Caco-2 (cell line): ENCODE measurements at regions of chr5 and their contacts with region 1.

Region 1: DNA sequence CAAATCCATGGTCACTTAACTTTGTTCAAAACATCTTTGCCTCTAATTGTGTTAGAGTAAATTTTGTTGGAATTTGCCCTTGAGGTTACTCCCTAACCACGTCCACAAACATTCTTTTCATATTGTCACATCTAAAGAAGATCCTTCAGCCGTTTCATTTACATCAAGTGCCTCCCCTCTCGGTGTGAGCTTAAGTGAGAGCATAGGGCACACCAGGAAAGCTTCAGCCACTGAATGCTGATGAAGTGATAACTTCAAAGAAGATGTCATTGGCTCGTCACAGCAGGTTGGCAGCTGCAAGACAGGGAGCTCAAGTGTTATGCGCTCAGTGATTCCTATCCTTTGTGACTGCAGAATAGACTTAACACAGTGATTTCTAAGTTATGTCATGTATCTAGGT is 49.6 kb upstream of the ADAMTS19 start:
- DNase-seq: peak; percentile 8 to 39
- H3K4me3 ChIP-seq: no peak overlapping the region
- H3K4me3 Mint-ChIP-seq: no peak overlapping the region
- H3K27ac Mint-ChIP-seq: no peak overlapping the region
- H3K4me1 ChIP-seq: peaks cover 26% of the 10 kb centered on the region; the same call in 1 of the 2 replicates
- H3K4me1 Mint-ChIP-seq: peaks cover 18% of the 10 kb centered on the region
- H3K27me3 ChIP-seq: no peaks in the 10 kb centered on the region
- H3K27me3 Mint-ChIP-seq: peaks cover 2% of the 10 kb centered on the region
- CTCF ChIP-seq: no peak

Region 2: GRCh38 chr5:128228008-128228407 is 1182.5 kb before region 1 on chr5:
- CTCF ChIA-PET with region 1: no interaction called
- POLR2A ChIA-PET with region 1: no interaction called
- intact Hi-C with region 1: no loop called
- DNase-seq: no peak
- H3K4me3 ChIP-seq: no peak overlapping the region
- H3K4me3 Mint-ChIP-seq: no peak overlapping the region
- H3K27ac Mint-ChIP-seq: no peak overlapping the region
- H3K4me1 ChIP-seq: no peaks in the 10 kb centered on the region
- H3K4me1 Mint-ChIP-seq: peaks cover 4% of the 10 kb centered on the region
- H3K27me3 ChIP-seq: no peaks in the 10 kb centered on the region
- H3K27me3 Mint-ChIP-seq: peaks cover 2% of the 10 kb centered on the region
- CTCF ChIP-seq: no peak

Region 3: GRCh38 chr5:129377504-129377903 is 33.0 kb before region 1 on chr5:
- CTCF ChIA-PET with region 1: no interaction called
- POLR2A ChIA-PET with region 1: no interaction called
- intact Hi-C with region 1: loop called (anchors 2 kb)
- DNase-seq: peak; percentile 63 to 83
- H3K4me3 ChIP-seq: no peak overlapping the region
- H3K4me3 Mint-ChIP-seq: peak overlapping the region; percentile 22
- H3K27ac Mint-ChIP-seq: peak overlapping the region; percentile 26
- H3K4me1 ChIP-seq: peaks cover 26% of the 10 kb centered on the region
- H3K4me1 Mint-ChIP-seq: peaks cover 12% of the 10 kb centered on the region
- H3K27me3 ChIP-seq: no peaks in the 10 kb centered on the region
- H3K27me3 Mint-ChIP-seq: no peaks in the 10 kb centered on the region
- CTCF ChIP-seq: no peak

Region 4: DNA sequence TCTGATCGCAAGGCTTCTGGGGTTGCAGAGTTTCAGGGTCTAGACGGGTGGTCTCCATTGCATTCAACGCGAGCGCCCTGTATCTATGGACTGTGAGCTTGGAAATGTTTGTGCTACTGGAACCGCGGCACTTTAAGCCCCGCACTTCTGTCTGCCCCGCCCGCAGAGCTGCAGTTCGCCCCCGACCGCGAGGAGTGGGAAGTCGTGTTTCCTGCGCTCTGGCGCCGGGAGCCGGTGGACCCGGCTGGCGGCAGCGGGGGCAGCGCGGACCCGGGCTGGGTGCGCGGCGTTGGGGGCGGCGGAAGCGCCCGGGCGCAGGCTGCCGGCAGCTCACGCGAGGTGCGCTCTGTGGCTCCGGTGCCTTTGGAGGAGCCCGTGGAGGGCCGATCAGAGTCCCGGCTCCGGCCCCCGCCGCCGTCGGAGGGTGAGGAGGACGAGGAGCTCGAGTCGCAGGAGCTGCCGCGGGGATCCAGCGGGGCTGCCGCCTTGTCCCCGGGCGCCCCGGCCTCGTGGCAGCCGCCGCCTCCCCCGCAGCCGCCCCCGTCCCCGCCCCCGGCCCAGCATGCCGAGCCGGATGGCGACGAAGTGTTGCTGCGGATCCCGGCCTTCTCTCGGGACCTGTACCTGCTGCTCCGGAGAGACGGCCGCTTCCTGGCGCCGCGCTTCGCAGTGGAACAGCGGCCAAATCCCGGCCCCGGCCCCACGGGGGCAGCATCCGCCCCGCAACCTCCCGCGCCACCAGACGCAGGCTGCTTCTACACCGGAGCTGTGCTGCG is 50.6 kb after region 1 on chr5:
- CTCF ChIA-PET with region 1: no interaction called
- POLR2A ChIA-PET with region 1: no interaction called
- intact Hi-C with region 1: loop called (anchors 5 kb)
- DNase-seq: peak; percentile 63 to 76
- H3K4me3 ChIP-seq: peak overlapping the region; percentile 40
- H3K4me3 Mint-ChIP-seq: peak overlapping the region; percentile 78
- H3K27ac Mint-ChIP-seq: peak overlapping the region; percentile 31
- H3K4me1 ChIP-seq: no peaks in the 10 kb centered on the region; the same call in 1 of the 2 replicates
- H3K4me1 Mint-ChIP-seq: no peaks in the 10 kb centered on the region
- H3K27me3 ChIP-seq: peaks cover 3% of the 10 kb centered on the region
- H3K27me3 Mint-ChIP-seq: peaks cover 29% of the 10 kb centered on the region
- CTCF ChIP-seq: peak; percentile 60 to 80